AG04450 (cell line): ENCODE measurements at regions of chr11 and their contacts with region 1.

Region 1: GRCh38 chr11:4768094-4768493 is 1.6 kb downstream of the OR51F1 start:
- DNase-seq: no peak
- H3K4me3 ChIP-seq: no peak overlapping the region
- H3K27ac ChIP-seq: no peak overlapping the region
- H3K27me3 ChIP-seq: no peaks in the 10 kb centered on the region
- CTCF ChIP-seq: no peak

Region 2: GRCh38 chr11:4181782-4182721 is 586.0 kb before region 1 on chr11:
- CTCF ChIA-PET with region 1: interaction called, 10 read pairs
- POLR2A ChIA-PET with region 1: no interaction called
- DNase-seq: peak; percentile 16
- H3K4me3 ChIP-seq: no peak overlapping the region
- H3K27ac ChIP-seq: no peak overlapping the region
- H3K27me3 ChIP-seq: peaks cover 6% of the 10 kb centered on the region
- CTCF ChIP-seq: peak; percentile 70

Region 3: DNA sequence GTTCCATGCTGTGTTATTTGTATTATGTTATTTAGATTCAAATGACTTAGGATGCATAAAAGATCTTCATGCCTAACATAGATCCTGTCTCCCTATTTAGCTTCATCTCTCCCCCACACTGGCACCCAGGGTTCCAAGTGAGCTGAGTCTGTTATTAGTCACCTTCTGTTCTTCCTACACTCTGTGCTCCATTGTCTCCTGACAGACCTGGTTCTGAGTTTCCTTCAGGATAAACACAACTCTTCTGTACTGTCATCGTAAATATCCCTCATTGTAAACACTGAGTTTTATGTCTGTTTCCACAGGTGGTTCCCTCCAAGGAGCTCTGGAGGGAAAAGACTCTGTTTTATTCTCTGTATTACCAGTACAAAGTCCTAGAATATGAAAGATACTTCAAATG is 54.9 kb before region 1 on chr11:
- CTCF ChIA-PET with region 1: no interaction called
- POLR2A ChIA-PET with region 1: no interaction called
- DNase-seq: no peak
- H3K4me3 ChIP-seq: no peak overlapping the region
- H3K27ac ChIP-seq: no peak overlapping the region
- H3K27me3 ChIP-seq: no peaks in the 10 kb centered on the region
- CTCF ChIP-seq: no peak